CD4-positive, alpha-beta memory T cell (primary cell): ENCODE measurements at regions of chr12 and their contacts with region 1.

Region 1: GRCh38 chr12:121494093-121494787 is 86.6 kb downstream of the KDM2B start:
- DNase-seq: peak; percentile 44 to 59 (median 56)
- H3K4me3 ChIP-seq: no peak overlapping the region
- H3K4me3 Mint-ChIP-seq: no peak overlapping the region
- H3K27ac ChIP-seq: no peak overlapping the region
- H3K27ac Mint-ChIP-seq: peak overlapping the region in 4 of 7 donors; percentile 41 to 93 (median 56)
- H3K4me1 ChIP-seq: peaks cover 12% of the 10 kb centered on the region
- H3K4me1 Mint-ChIP-seq: peaks cover 10 to 20% (median 15%) of the 10 kb centered on the region in 4 donors
- H3K27me3 ChIP-seq: no peaks in the 10 kb centered on the region
- H3K27me3 Mint-ChIP-seq: no peaks in the 10 kb centered on the region

Region 2: GRCh38 chr12:121427556-121428055 is 66.6 kb before region 1 on chr12:
- CTCF ChIA-PET with region 1: no interaction called
- POLR2A ChIA-PET with region 1: no interaction called
- intact Hi-C with region 1: no loop called
- DNase-seq: no peak
- H3K4me3 ChIP-seq: no peak overlapping the region
- H3K4me3 Mint-ChIP-seq: no peak overlapping the region
- H3K27ac ChIP-seq: no peak overlapping the region
- H3K27ac Mint-ChIP-seq: peak overlapping the region in 4 of 7 donors; percentile 6 to 67 (median 44)
- H3K4me1 ChIP-seq: no peaks in the 10 kb centered on the region
- H3K4me1 Mint-ChIP-seq: peaks cover 0 to 4% (median 1%) of the 10 kb centered on the region in 4 donors
- H3K27me3 ChIP-seq: no peaks in the 10 kb centered on the region
- H3K27me3 Mint-ChIP-seq: no peaks in the 10 kb centered on the region

Region 3: GRCh38 chr12:121483949-121484348 is 10.3 kb before region 1 on chr12:
- CTCF ChIA-PET with region 1: interaction called, 35 read pairs
- POLR2A ChIA-PET with region 1: no interaction called
- intact Hi-C with region 1: no loop called
- DNase-seq: no peak
- H3K4me3 ChIP-seq: no peak overlapping the region
- H3K4me3 Mint-ChIP-seq: no peak overlapping the region
- H3K27ac ChIP-seq: no peak overlapping the region
- H3K27ac Mint-ChIP-seq: peak overlapping the region in 3 of 7 donors; percentile 22 to 48 (median 47)
- H3K4me1 ChIP-seq: no peaks in the 10 kb centered on the region
- H3K4me1 Mint-ChIP-seq: peaks cover 1 to 22% (median 3%) of the 10 kb centered on the region in 4 donors
- H3K27me3 ChIP-seq: no peaks in the 10 kb centered on the region
- H3K27me3 Mint-ChIP-seq: no peaks in the 10 kb centered on the region

Region 4: GRCh38 chr12:121505513-121505912 is 11.3 kb after region 1 on chr12:
- CTCF ChIA-PET with region 1: interaction called, 35 read pairs
- POLR2A ChIA-PET with region 1: no interaction called
- intact Hi-C with region 1: no loop called
- DNase-seq: no peak
- H3K4me3 ChIP-seq: no peak overlapping the region
- H3K4me3 Mint-ChIP-seq: no peak overlapping the region
- H3K27ac ChIP-seq: no peak overlapping the region
- H3K27ac Mint-ChIP-seq: peak overlapping the region in 5 of 7 donors; percentile 10 to 64 (median 46)
- H3K4me1 ChIP-seq: no peaks in the 10 kb centered on the region
- H3K4me1 Mint-ChIP-seq: peaks cover 0 to 10% (median 3%) of the 10 kb centered on the region in 4 donors
- H3K27me3 ChIP-seq: no peaks in the 10 kb centered on the region
- H3K27me3 Mint-ChIP-seq: no peaks in the 10 kb centered on the region

Region 5: GRCh38 chr12:121678716-121679580 is 184.7 kb after region 1 on chr12:
- CTCF ChIA-PET with region 1: interaction called, 54 read pairs
- POLR2A ChIA-PET with region 1: no interaction called
- intact Hi-C with region 1: loop called (anchors 1 kb)
- DNase-seq: no peak
- H3K4me3 ChIP-seq: no peak overlapping the region
- H3K4me3 Mint-ChIP-seq: no peak overlapping the region
- H3K27ac ChIP-seq: no peak overlapping the region
- H3K27ac Mint-ChIP-seq: peak overlapping the region in 4 of 7 donors; percentile 18 to 70 (median 50)
- H3K4me1 ChIP-seq: peaks cover 3% of the 10 kb centered on the region
- H3K4me1 Mint-ChIP-seq: peaks cover 4 to 10% (median 5%) of the 10 kb centered on the region in 4 donors
- H3K27me3 ChIP-seq: no peaks in the 10 kb centered on the region
- H3K27me3 Mint-ChIP-seq: no peaks in the 10 kb centered on the region